Activated CD4-positive, alpha-beta memory T cell treated with anti-CD3 and anti-CD28 coated beads for 36 hours (primary cell): ENCODE measurements at regions of chr4 and their contacts with region 1.

Region 1: GRCh38 chr4:82373816-82374625 is at the start of gene HNRNPD:
- DNase-seq: peak; percentile 96
- H3K4me3 Mint-ChIP-seq: peak within 1 kb of the TSS; percentile 97
- H3K27ac Mint-ChIP-seq: peak within 1 kb of the TSS; percentile 97
- H3K4me1 Mint-ChIP-seq: peaks cover 35% of the 10 kb centered on the region
- H3K27me3 Mint-ChIP-seq: no peaks in the 10 kb centered on the region
- total RNA-seq, gene HNRNPD: 398 to 400 TPM

Region 2: GRCh38 chr4:82284858-82285805 is 88.9 kb before region 1 on chr4:
- CTCF ChIA-PET with region 1: interaction called, 3 read pairs
- POLR2A ChIA-PET with region 1: no interaction called
- intact Hi-C with region 1: loop called (anchors 1 kb)
- DNase-seq: peak; percentile 100
- H3K4me3 Mint-ChIP-seq: peak overlapping the region; percentile 61
- H3K27ac Mint-ChIP-seq: peak overlapping the region; percentile 38
- H3K4me1 Mint-ChIP-seq: peaks cover 12% of the 10 kb centered on the region
- H3K27me3 Mint-ChIP-seq: peaks cover 3% of the 10 kb centered on the region

Region 3: GRCh38 chr4:82360298-82361177 is 13.5 kb before region 1 on chr4:
- CTCF ChIA-PET with region 1: interaction called, 26 read pairs
- POLR2A ChIA-PET with region 1: interaction called, 21 read pairs
- intact Hi-C with region 1: loop called (anchors 1 kb)
- DNase-seq: no peak
- H3K4me3 Mint-ChIP-seq: no peak overlapping the region
- H3K27ac Mint-ChIP-seq: peak overlapping the region; percentile 13
- H3K4me1 Mint-ChIP-seq: peaks cover 81% of the 10 kb centered on the region
- H3K27me3 Mint-ChIP-seq: no peaks in the 10 kb centered on the region

Region 4: GRCh38 chr4:82428969-82429727 is 55.1 kb after region 1 on chr4:
- CTCF ChIA-PET with region 1: interaction called, 16 read pairs
- POLR2A ChIA-PET with region 1: interaction called, 57 read pairs
- intact Hi-C with region 1: loop called (anchors 1 kb)
- DNase-seq: peak; percentile 95
- H3K4me3 Mint-ChIP-seq: peak overlapping the region; percentile 99
- H3K27ac Mint-ChIP-seq: peak overlapping the region; percentile 97
- H3K4me1 Mint-ChIP-seq: peaks cover 60% of the 10 kb centered on the region
- H3K27me3 Mint-ChIP-seq: no peaks in the 10 kb centered on the region

Region 5: GRCh38 chr4:83012687-83013419 is 638.8 kb after region 1 on chr4:
- CTCF ChIA-PET with region 1: no interaction called
- POLR2A ChIA-PET with region 1: no interaction called
- intact Hi-C with region 1: loop called (anchors 1 kb)
- DNase-seq: peak; percentile 98
- H3K4me3 Mint-ChIP-seq: peak overlapping the region; percentile 92
- H3K27ac Mint-ChIP-seq: peak overlapping the region; percentile 92
- H3K4me1 Mint-ChIP-seq: peaks cover 36% of the 10 kb centered on the region
- H3K27me3 Mint-ChIP-seq: no peaks in the 10 kb centered on the region

Region 6: GRCh38 chr4:83455281-83456129 is 1081.5 kb after region 1 on chr4 and contains the starts of genes HELQ and MRPS18C:
- CTCF ChIA-PET with region 1: no interaction called
- POLR2A ChIA-PET with region 1: no interaction called
- intact Hi-C with region 1: loop called (anchors 1 kb)
- DNase-seq: peak; percentile 98
- H3K4me3 Mint-ChIP-seq: peak within 1 kb of the TSS; percentile 100
- H3K27ac Mint-ChIP-seq: peak within 1 kb of the TSS; percentile 100
- H3K4me1 Mint-ChIP-seq: peaks cover 44% of the 10 kb centered on the region
- H3K27me3 Mint-ChIP-seq: peaks cover 2% of the 10 kb centered on the region
- total RNA-seq, gene HELQ: 9.5 to 13.3 TPM
- total RNA-seq, gene MRPS18C: 63.3 to 72.8 TPM